ENCODE measurements at regions of chrX and their contacts with region 1.

Region 1: GRCh38 chrX:41923257-41923969 is at the start of gene CASK:
- DNase-seq: peak; percentile 93
- ATAC-seq: peak; percentile 81
- H3K4me3 Mint-ChIP-seq: peak within 1 kb of the TSS; percentile 80
- H3K27ac Mint-ChIP-seq: peak within 1 kb of the TSS; percentile 77
- H3K4me1 Mint-ChIP-seq: peaks cover 25% of the 10 kb centered on the region
- H3K27me3 Mint-ChIP-seq: no peaks in the 10 kb centered on the region
- total RNA-seq, gene CASK: 14.4 to 15.0 TPM

Region 2: GRCh38 chrX:41558531-41558930 is 364.9 kb before region 1 on chrX:
- CTCF ChIA-PET with region 1: no interaction called
- POLR2A ChIA-PET with region 1: no interaction called
- intact Hi-C with region 1: loop called in 1 of 2 experiments (anchors 5 kb)
- DNase-seq: peak; percentile 6
- ATAC-seq: no peak
- H3K4me3 Mint-ChIP-seq: no peak overlapping the region
- H3K27ac Mint-ChIP-seq: no peak overlapping the region
- H3K4me1 Mint-ChIP-seq: peaks cover 32% of the 10 kb centered on the region
- H3K27me3 Mint-ChIP-seq: no peaks in the 10 kb centered on the region

Region 3: GRCh38 chrX:41796577-41796976 is 126.8 kb before region 1 on chrX:
- CTCF ChIA-PET with region 1: interaction called, 6 read pairs
- POLR2A ChIA-PET with region 1: no interaction called
- intact Hi-C with region 1: loop called in 1 of 2 experiments (anchors 2 kb)
- DNase-seq: no peak
- ATAC-seq: no peak
- H3K4me3 Mint-ChIP-seq: no peak overlapping the region
- H3K27ac Mint-ChIP-seq: peak overlapping the region; percentile 60
- H3K4me1 Mint-ChIP-seq: peaks cover 33% of the 10 kb centered on the region
- H3K27me3 Mint-ChIP-seq: no peaks in the 10 kb centered on the region

Region 4: DNA sequence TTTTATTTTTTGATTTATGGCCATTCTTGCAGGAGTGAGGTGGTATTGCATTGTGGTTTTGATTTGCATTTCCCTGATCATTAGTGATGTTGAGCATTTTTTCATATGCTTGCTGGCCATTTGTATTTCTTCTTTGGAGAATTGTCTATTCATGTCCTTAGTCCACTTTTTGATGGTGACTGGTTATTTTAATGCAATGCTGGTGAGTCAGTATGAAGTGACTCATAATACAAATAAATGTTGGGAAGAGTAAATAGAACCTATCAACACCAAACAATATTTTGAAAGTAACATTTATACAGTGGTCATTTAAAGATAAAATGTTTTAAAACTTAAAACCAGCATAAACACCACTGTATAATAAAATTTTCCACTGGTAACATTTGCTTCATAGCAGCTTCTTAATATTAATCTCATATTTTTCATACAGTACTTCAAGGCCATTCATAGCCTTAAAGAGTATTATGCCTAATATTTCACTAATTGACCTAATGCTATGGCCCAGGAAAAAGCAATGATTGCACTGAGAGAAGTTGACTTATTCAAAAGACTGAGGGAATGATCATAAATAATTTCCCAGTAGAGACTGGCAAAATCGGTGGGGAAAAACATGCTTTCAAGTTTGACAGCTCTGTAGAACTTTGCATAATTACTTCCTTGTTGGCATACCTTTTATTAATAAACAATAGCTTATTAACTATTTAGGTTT is 33.9 kb before region 1 on chrX:
- CTCF ChIA-PET with region 1: no interaction called
- POLR2A ChIA-PET with region 1: no interaction called
- intact Hi-C with region 1: no loop called
- DNase-seq: no peak
- ATAC-seq: no peak
- H3K4me3 Mint-ChIP-seq: no peak overlapping the region
- H3K27ac Mint-ChIP-seq: no peak overlapping the region
- H3K4me1 Mint-ChIP-seq: peaks cover 21% of the 10 kb centered on the region
- H3K27me3 Mint-ChIP-seq: no peaks in the 10 kb centered on the region

Region 5: GRCh38 chrX:41906515-41907165 is 16.8 kb before region 1 on chrX:
- CTCF ChIA-PET with region 1: interaction called, 4 read pairs
- POLR2A ChIA-PET with region 1: no interaction called
- intact Hi-C with region 1: loop called in 1 of 2 experiments (anchors 2 kb)
- DNase-seq: peak; percentile 55
- ATAC-seq: peak; percentile 72
- H3K4me3 Mint-ChIP-seq: no peak overlapping the region
- H3K27ac Mint-ChIP-seq: peak overlapping the region; percentile 72
- H3K4me1 Mint-ChIP-seq: peaks cover 44% of the 10 kb centered on the region
- H3K27me3 Mint-ChIP-seq: no peaks in the 10 kb centered on the region

Region 6: GRCh38 chrX:41970419-41971065 is 47.1 kb after region 1 on chrX:
- CTCF ChIA-PET with region 1: no interaction called
- POLR2A ChIA-PET with region 1: no interaction called
- intact Hi-C with region 1: no loop called
- DNase-seq: no peak
- ATAC-seq: no peak
- H3K4me3 Mint-ChIP-seq: no peak overlapping the region
- H3K27ac Mint-ChIP-seq: no peak overlapping the region
- H3K4me1 Mint-ChIP-seq: no peaks in the 10 kb centered on the region
- H3K27me3 Mint-ChIP-seq: no peaks in the 10 kb centered on the region

Region 7: DNA sequence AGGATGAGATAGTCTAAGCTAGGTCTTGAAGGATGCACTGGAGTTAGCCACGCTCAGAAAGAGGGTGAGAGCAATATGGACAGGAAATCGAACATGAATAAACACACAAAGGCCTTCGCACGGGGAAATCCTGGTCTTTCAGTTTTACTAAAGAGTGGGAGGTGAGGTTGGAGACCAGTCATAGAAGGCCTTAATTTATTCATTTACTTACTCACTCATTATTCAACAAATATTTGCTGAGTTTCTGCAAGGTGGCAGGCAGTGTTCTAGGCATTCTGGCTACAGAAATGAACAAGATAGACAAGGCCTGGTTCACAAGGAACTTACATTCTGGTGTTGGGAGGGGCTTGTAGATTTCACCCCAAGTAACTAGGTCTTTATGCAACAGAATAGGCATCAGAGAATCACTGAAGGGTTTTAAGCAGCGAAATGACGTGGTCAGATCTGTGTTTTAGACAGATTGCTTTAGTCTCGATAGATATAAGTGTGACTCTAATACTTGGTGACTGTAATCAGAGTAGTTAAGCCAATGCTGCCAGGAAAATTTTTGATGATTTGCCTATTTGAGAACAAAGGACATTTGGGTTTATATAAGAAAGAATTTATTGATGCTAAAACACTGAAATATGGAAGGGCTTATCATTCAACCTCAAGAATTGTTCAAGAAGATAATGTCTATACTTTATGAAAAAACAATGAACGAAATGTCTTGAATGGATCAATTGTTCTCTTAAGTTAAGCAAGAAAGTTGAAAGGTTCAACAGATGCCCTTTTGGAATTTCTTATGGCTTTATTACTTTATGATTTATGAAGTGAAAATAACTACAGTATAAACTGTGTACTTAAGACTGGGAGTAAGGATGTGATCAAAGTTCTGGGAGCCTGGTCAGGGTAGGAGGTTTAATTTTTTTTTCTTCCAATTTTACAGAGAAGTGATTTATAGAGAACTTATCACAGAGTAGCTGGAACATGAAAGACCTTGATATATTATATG is 184.4 kb after region 1 on chrX:
- CTCF ChIA-PET with region 1: no interaction called
- POLR2A ChIA-PET with region 1: no interaction called
- intact Hi-C with region 1: loop called in 1 of 2 experiments (anchors 5 kb)
- DNase-seq: peak; percentile 43
- ATAC-seq: peak; percentile 86
- H3K4me3 Mint-ChIP-seq: no peak overlapping the region
- H3K27ac Mint-ChIP-seq: no peak overlapping the region
- H3K4me1 Mint-ChIP-seq: peaks cover 15% of the 10 kb centered on the region
- H3K27me3 Mint-ChIP-seq: no peaks in the 10 kb centered on the region

Region 8: DNA sequence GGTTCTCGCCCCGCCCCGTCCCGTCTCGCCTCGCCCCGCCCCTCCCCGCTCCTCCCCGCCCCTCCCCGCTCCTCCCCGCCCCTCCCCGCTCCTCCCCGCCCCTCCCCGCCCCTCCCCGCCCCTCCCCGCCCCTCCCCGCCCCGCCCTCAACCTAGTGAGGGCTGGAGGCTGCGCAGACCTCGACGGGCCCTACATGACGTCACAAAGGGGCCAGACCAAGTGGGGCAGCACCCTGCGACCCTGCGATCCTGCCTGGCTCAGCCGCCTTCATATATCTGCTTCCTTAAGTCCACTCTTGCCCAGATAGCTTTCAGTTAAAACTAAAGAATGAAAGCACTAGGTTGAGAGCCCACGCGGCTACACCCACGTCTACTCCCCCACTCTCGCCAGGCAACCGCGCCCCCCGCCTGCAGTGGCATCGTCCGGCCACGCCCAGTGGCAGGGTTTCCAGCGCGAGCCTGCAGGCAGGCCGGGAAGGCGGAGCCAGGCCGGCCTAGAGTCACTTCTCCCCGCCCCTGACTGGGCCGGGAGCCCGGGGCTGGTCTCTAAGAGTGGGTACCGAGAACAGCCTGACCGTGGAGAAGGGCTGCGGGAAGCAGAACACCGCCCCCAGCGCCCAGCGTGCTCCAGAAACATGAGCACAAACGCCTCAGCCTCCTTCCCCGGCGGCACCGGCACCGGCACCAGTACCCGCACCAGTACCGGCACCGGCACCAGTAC is 1731.2 kb after region 1 on chrX:
- CTCF ChIA-PET with region 1: no interaction called
- POLR2A ChIA-PET with region 1: no interaction called
- intact Hi-C with region 1: loop called in 1 of 2 experiments (anchors 10 kb)
- DNase-seq: peak; percentile 89
- ATAC-seq: peak; percentile 97
- H3K4me3 Mint-ChIP-seq: peak overlapping the region; percentile 80
- H3K27ac Mint-ChIP-seq: peak overlapping the region; percentile 98
- H3K4me1 Mint-ChIP-seq: peaks cover 5% of the 10 kb centered on the region
- H3K27me3 Mint-ChIP-seq: no peaks in the 10 kb centered on the region